A673 (cell line): ENCODE measurements at regions of chr10 and their contacts with region 1.

Region 1: DNA sequence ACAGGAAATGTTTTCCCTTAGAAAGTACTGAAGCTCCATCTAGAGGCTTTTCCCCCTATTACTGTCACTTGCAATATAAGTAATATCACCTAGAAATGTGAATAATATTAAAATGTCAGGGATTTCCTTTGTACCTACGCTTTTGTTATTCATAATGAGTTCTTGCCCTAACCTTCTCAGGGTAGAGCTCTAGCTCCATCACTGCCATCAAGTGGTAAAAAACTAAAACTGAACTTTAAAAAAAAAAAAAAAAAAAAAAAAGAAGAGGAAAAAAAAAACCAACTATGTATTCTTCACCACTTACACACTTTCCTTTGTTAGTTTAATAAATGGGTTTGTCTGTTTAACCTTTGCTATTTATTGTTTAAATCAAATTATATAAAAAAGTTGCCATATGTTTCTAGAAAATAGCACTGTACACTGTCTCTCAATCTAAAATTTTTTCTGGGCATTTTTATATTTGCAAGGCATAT is 49.9 kb downstream of the DNAJC1 start:
- DNase-seq: peak; percentile 77
- H3K4me3 ChIP-seq: no peak overlapping the region
- H3K27ac ChIP-seq: no peak overlapping the region
- H3K4me1 ChIP-seq: peaks cover 18% of the 10 kb centered on the region
- H3K27me3 ChIP-seq: no peaks in the 10 kb centered on the region
- CTCF ChIP-seq: peak; percentile 62

Region 2: DNA sequence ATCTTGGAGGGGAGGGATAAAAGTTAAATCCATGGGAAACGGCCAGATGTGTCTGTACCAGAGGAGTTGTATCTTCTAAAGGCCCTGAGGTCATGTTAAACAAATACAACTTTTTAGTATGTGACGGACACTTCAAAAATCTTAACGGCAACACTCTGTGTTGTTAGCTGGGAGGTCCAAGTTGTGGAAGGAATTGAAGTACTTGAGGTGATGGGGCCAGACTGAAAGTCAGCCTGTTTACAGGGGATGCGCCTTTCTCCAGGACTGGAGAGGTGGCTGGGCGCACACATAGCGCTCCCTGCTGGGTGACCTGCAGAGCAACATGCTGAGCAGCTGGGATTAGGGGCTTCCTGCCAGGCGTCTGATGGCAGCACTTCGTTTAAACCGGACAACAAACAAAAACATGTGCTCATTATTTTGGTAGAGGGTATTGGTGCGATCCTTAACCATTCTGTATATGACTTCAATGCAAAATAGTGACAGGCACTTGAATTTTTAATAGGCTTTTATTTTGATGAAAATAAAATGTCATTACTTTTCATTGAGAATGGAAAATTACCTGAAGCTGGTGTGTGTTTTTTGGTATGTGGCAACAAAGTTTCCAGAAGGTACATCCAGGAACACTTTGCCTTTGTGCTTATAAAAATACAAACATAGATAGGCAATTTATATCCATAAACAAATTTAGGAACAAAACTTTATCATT is 221.4 kb before region 1 on chr10:
- CTCF ChIA-PET with region 1: no interaction called
- POLR2A ChIA-PET with region 1: no interaction called
- intact Hi-C with region 1: loop called (anchors 10 kb)
- DNase-seq: peak; percentile 88
- H3K4me3 ChIP-seq: no peak overlapping the region
- H3K27ac ChIP-seq: no peak overlapping the region
- H3K4me1 ChIP-seq: peaks cover 73% of the 10 kb centered on the region
- H3K27me3 ChIP-seq: no peaks in the 10 kb centered on the region
- CTCF ChIP-seq: peak; percentile 94

Region 3: DNA sequence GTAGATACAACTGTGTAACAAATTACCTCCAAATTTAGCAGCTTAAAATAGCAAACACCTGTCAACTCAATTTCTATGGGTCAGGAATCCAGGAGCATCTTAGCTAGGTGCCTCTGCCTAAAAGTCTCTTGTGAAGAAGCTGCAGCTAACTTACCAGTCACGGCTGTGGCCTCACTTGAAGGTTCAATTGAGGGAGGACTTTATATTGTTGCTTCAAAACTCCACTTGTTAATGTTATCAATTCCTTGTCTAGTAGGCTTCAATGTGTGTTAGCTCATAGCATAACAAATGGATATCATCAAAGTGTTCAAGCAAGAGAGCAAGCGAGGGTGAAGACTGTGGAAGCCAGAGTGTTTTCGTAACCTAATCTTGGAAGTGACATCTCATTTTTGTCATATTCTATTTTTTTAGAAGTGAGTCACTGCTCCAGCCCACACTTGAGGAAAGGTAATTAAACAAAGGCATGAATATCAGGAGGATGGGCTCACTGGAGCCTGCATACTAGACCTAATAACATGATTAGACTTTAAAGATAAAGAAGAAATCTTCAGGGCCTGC is 564.6 kb after region 1 on chr10:
- CTCF ChIA-PET with region 1: no interaction called
- POLR2A ChIA-PET with region 1: no interaction called
- intact Hi-C with region 1: no loop called
- DNase-seq: no peak
- H3K4me3 ChIP-seq: no peak overlapping the region
- H3K27ac ChIP-seq: no peak overlapping the region
- H3K4me1 ChIP-seq: no peaks in the 10 kb centered on the region
- H3K27me3 ChIP-seq: no peaks in the 10 kb centered on the region
- CTCF ChIP-seq: no peak

Region 4: GRCh38 chr10:23253780-23254179 is 1300.2 kb after region 1 on chr10:
- CTCF ChIA-PET with region 1: interaction called, 15 read pairs
- POLR2A ChIA-PET with region 1: no interaction called
- intact Hi-C with region 1: no loop called
- DNase-seq: no peak
- H3K4me3 ChIP-seq: no peak overlapping the region
- H3K27ac ChIP-seq: no peak overlapping the region
- H3K4me1 ChIP-seq: no peaks in the 10 kb centered on the region
- H3K27me3 ChIP-seq: peaks cover 48% of the 10 kb centered on the region
- CTCF ChIP-seq: no peak